Naive thymus-derived CD8-positive, alpha-beta T cell (primary cell): ENCODE measurements at regions of chr2 and their contacts with region 1.

Region 1: GRCh38 chr2:43637030-43637803 is at the start of gene PLEKHH2:
- DNase-seq: peak; percentile 80 to 92 (median 86)
- ATAC-seq: peak; percentile 98 to 99
- H3K4me3 Mint-ChIP-seq: peak within 1 kb of the TSS; percentile 89 to 97 (median 93)
- H3K27ac Mint-ChIP-seq: peak within 1 kb of the TSS in 9 of 10 donors; percentile 28 to 95 (median 74)
- H3K4me1 Mint-ChIP-seq: peaks cover 8 to 19% (median 12%) of the 10 kb centered on the region in 4 donors
- H3K27me3 Mint-ChIP-seq: peaks cover 15 to 37% (median 18%) of the 10 kb centered on the region in 5 donors
- polyA plus RNA-seq, gene PLEKHH2: 0.13 to 0.80 TPM in 2 of 3 donors, not detected in the other

Region 2: GRCh38 chr2:42693013-42693615 is 944.1 kb before region 1 on chr2:
- POLR2A ChIA-PET with region 1: interaction called, 11 read pairs
- DNase-seq: no peak
- ATAC-seq: no peak
- H3K4me3 Mint-ChIP-seq: no peak overlapping the region
- H3K27ac Mint-ChIP-seq: peak overlapping the region in 3 of 10 donors; percentile 47 to 75 (median 65)
- H3K4me1 Mint-ChIP-seq: peaks cover 6 to 19% (median 10%) of the 10 kb centered on the region in 4 donors
- H3K27me3 Mint-ChIP-seq: no peaks in the 10 kb centered on the region

Region 3: DNA sequence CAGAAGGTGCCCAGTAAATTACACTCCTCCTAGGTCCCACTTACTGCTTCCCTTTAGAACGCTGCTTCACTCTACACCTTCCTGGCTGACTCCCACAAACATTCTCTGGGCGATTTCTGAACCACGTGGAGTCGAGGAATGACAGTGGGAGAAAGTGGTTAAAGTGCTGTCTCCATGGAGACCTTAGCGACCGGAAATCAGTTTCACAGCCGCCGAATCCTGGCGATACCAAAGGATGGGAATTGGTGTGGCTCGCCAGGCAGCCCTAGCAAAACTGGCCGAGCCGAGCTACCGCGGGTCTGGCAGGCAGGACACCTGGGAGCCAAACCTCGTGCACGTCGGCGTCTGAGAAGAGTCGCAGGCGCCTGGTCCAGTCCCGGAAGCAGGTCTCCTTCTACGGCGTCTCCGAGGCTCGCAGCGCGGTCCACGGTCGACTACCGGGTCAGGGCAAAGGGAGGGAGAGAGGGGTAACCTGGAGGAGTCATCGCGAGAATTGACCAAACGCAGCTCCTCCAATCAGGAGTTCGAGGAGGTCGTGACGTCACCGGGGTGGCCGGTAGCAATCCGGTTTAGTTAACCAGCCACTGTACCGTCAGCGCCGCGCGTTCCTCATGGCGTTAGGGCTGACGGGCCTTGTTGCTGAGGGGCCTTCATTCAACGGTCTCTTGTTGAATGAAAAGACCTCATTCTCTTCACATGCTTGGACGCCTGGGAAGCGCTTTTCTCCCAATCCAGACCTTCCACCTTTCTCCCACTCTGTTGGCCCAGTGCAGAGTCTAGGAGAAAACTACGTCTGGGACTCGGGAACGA is 41.4 kb before region 1 on chr2 and contains the start of gene THADA:
- POLR2A ChIA-PET with region 1: interaction called, 10 read pairs
- DNase-seq: peak; percentile 82 to 98 (median 95)
- ATAC-seq: peak; percentile 92 to 95
- H3K4me3 Mint-ChIP-seq: peak within 1 kb of the TSS; percentile 89 to 97 (median 96)
- H3K27ac Mint-ChIP-seq: peak within 1 kb of the TSS; percentile 96 to 99 (median 98)
- H3K4me1 Mint-ChIP-seq: peaks cover 17 to 41% (median 32%) of the 10 kb centered on the region in 4 donors
- H3K27me3 Mint-ChIP-seq: peaks cover 0 to 6% (median 3%) of the 10 kb centered on the region in 5 donors
- polyA plus RNA-seq, gene THADA: 9.2 to 15.5 (median 9.8) TPM

Region 4: DNA sequence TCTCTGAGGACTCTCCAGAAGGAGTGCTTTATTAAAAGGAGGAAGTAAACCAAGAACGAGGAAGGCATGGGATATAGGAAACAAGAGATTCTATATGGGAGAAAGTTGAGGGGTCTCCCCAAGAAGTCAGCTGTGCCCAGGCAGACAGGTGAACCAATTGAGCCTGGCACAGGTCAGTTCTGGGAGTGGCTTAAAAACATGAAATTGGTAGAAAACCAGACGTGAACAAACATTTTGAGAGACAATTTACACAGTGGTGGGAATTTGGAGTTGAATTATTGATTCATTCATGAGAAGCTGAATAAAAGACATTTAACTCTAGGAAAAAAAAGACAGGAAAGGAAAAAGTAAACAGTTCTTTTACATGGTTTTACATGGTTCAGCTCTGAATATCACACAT is 16.3 kb after region 1 on chr2:
- POLR2A ChIA-PET with region 1: no interaction called
- DNase-seq: no peak
- ATAC-seq: no peak
- H3K4me3 Mint-ChIP-seq: no peak overlapping the region
- H3K27ac Mint-ChIP-seq: no peak overlapping the region
- H3K4me1 Mint-ChIP-seq: no peaks in the 10 kb centered on the region
- H3K27me3 Mint-ChIP-seq: peaks cover 3 to 18% (median 5%) of the 10 kb centered on the region in 5 donors